Caco-2 (cell line): ENCODE measurements at regions of chr7 and their contacts with region 1.

Region 1: DNA sequence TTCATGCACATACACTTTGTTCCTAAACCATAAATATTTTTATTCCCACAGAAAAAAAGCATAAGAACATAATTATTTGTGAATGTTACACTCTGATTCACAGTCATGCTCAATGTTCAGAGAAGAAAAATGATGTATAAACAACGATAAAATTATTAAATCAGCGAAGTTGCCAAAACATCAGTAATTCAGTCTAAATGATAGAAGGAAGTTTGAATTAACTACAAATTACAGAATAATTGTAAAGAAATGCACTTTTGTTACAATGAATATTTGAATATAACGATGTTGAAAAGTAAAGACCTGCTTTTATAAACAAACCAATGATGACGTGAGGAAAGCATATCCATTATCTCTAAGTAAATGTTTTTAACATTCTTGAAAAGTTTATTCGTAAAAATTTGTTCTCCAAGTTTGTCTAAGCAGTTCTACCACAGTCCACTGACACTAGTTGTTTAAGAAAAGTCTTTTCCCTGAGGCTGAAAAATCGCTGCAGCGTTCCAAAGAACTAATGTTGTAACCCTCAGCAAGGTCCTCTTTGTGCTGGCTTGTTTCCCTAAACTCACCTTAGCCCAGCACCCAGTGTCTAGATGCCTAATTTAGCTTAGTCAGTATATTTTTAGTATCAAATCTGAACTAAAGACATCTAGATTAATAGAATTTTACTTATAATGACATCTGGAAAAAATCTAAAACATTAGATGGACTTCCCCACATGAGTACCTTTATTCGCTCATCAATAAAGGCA is 30.4 kb downstream of the TSPAN12 start:
- DNase-seq: no peak
- H3K4me3 ChIP-seq: no peak overlapping the region
- H3K4me3 Mint-ChIP-seq: no peak overlapping the region
- H3K27ac Mint-ChIP-seq: no peak overlapping the region
- H3K4me1 ChIP-seq: no peaks in the 10 kb centered on the region
- H3K4me1 Mint-ChIP-seq: no peaks in the 10 kb centered on the region
- H3K27me3 ChIP-seq: no peaks in the 10 kb centered on the region
- H3K27me3 Mint-ChIP-seq: peaks cover 8% of the 10 kb centered on the region
- CTCF ChIP-seq: no peak

Region 2: GRCh38 chr7:120799813-120800475 is 27.6 kb before region 1 on chr7:
- CTCF ChIA-PET with region 1: no interaction called
- POLR2A ChIA-PET with region 1: no interaction called
- intact Hi-C with region 1: loop called (anchors 1 kb)
- DNase-seq: no peak
- H3K4me3 ChIP-seq: no peak overlapping the region
- H3K4me3 Mint-ChIP-seq: no peak overlapping the region
- H3K27ac Mint-ChIP-seq: no peak overlapping the region
- H3K4me1 ChIP-seq: no peaks in the 10 kb centered on the region
- H3K4me1 Mint-ChIP-seq: no peaks in the 10 kb centered on the region
- H3K27me3 ChIP-seq: no peaks in the 10 kb centered on the region
- H3K27me3 Mint-ChIP-seq: no peaks in the 10 kb centered on the region
- CTCF ChIP-seq: no peak